IMR-90 (cell line): ENCODE measurements at regions of chrX and their contacts with region 1.

Region 1: DNA sequence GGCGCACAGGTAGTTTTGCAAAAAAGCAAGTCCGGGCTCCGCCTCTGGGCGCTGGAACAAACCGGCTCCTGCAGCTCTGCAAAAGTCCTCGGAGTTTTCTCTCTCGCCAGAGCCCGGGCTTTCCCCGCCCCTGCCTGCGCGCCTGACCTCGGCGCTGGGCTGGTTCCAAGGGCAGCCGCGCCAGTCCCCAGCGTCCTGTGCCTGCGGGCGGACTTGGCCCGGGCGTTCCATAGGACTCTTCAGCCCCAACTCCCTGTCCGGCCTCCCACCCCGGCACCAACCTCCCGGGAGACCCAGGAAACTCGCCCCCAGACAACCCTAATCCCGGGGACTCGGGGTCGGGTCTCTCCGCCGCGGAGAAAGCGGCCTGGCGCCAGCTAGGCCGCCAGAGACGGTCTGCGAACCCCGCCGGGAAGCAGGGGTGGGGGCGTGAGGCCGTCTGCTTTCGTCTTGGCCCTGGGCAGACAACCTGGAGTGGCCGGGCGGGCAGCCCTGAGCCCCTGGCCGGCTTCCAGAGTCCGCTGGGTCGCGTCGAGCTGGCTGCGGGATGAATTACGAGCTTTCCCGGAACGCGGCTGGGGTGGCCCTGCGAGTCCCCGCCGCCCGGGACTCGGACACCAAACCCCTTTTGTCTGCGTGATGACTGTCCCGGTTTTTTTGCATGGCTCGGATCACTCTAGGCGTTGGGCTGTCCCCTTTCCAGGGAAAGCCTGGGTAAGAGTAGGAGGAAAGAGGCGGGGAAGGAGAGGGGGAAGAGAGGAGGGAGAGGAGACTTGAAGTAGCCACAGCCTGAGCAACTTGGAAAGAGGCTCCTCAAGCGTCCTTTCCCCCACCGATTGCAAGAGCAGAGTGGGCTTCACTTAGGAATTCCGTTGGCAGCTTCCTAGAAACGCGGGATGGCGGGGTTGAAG is 916 bp downstream of the MXRA5 start:
- DNase-seq: no peak
- ATAC-seq: peak; percentile 59
- H3K4me3 ChIP-seq: peak overlapping the region; percentile 39
- H3K27ac ChIP-seq: no peak overlapping the region
- H3K4me1 ChIP-seq: no peaks in the 10 kb centered on the region
- H3K27me3 ChIP-seq: peaks cover 16% of the 10 kb centered on the region
- CTCF ChIP-seq: no peak
- POLR2A ChIP-seq: no peak
- RAD21 ChIP-seq: no peak

Region 2: GRCh38 chrX:3124031-3124430 is 221.5 kb before region 1 on chrX:
- CTCF ChIA-PET with region 1: no interaction called
- POLR2A ChIA-PET with region 1: no interaction called
- dilution Hi-C with region 1: no loop called
- in situ Hi-C with region 1: no loop called
- intact Hi-C with region 1: loop called (anchors 5 kb)
- DNase-seq: peak; percentile 64
- ATAC-seq: peak; percentile 46; the same call in 1 of the 2 replicates
- H3K4me3 ChIP-seq: no peak overlapping the region
- H3K27ac ChIP-seq: no peak overlapping the region
- H3K4me1 ChIP-seq: 0 out of 2 replicates have a peak, but pooled peaks cover 2% of the 10 kb centered on the region
- H3K27me3 ChIP-seq: no peaks in the 10 kb centered on the region
- CTCF ChIP-seq: no peak
- POLR2A ChIP-seq: no peak
- RAD21 ChIP-seq: no peak

Region 3: DNA sequence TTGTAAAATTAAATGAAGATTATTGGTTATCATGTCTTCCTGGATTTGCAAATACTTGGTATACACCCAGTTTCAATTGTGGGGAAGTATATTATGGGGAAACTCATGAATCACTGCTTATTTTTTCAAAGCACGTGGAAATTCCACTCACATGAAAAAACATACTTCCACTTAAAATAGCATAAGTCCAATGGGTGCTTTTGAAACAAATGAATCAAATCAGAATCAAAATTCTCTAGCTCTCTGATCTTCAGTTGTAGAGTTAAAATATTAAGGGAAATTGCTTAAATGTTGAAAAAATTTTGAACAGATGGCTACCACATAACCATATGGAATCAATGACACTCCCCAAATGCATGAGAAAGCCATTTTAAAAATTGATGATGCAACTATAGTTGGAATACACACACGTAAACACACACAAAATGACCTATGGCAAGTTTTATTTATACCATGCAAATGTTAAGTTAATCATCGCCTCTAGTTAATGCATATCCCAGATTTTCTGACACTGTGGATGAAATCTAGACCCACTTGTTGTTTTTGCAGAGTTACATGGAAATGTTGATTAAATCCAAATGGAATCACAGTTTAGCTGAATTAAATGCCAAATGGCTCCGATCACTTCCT is 211.1 kb before region 1 on chrX:
- CTCF ChIA-PET with region 1: no interaction called
- POLR2A ChIA-PET with region 1: no interaction called
- dilution Hi-C with region 1: no loop called
- in situ Hi-C with region 1: no loop called
- intact Hi-C with region 1: no loop called
- DNase-seq: peak; percentile 38
- ATAC-seq: no peak
- H3K4me3 ChIP-seq: no peak overlapping the region
- H3K27ac ChIP-seq: no peak overlapping the region
- H3K4me1 ChIP-seq: peaks cover 1% of the 10 kb centered on the region; the same call in 1 of the 2 replicates
- H3K27me3 ChIP-seq: no peaks in the 10 kb centered on the region
- CTCF ChIP-seq: no peak
- POLR2A ChIP-seq: no peak
- RAD21 ChIP-seq: no peak